Activated T-helper 2 cell treated with anti-CD3 and anti-CD28 coated beads, Interferon-gamma antibody, Interleukin-2, Interleukin-4, amounts not matched to agents 10 μg/mL and 5 μg/mL and 100 μg/mL, durations not matched to agents 14 hours and 24 hours and 36 hours (primary cell): ENCODE measurements at regions of chr4 and their contacts with region 1.

Region 1: GRCh38 chr4:169485791-169486742 is 126.3 kb downstream of the NEK1 start:
- DNase-seq: no peak
- H3K4me3 Mint-ChIP-seq: no peak overlapping the region
- H3K27ac Mint-ChIP-seq: no peak overlapping the region
- H3K4me1 Mint-ChIP-seq: peaks cover 5% of the 10 kb centered on the region
- H3K27me3 Mint-ChIP-seq: no peaks in the 10 kb centered on the region

Region 2: DNA sequence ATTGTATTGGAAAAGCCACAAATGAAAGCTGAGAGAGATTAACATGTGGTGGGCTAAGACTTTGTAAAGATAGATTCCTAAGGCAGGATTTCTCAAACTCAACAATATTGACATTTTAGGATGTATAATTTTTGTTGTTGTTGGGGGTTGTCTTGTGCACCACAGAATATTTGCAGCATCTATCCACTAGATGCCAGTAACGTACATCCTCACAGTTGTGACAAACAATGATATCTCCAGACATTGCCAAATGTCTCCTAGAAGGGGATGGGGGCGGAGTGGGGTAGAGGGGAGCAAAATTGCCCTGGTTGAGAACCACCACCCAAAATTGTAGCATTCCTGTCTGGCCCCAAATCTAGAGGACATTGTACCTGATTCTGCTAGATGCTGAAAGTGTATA is 461.3 kb before region 1 on chr4:
- intact Hi-C with region 1: loop called (anchors 5 kb)
- DNase-seq: no peak
- H3K4me3 Mint-ChIP-seq: no peak overlapping the region
- H3K27ac Mint-ChIP-seq: no peak overlapping the region
- H3K4me1 Mint-ChIP-seq: no peaks in the 10 kb centered on the region
- H3K27me3 Mint-ChIP-seq: peaks cover 11% of the 10 kb centered on the region

Region 3: DNA sequence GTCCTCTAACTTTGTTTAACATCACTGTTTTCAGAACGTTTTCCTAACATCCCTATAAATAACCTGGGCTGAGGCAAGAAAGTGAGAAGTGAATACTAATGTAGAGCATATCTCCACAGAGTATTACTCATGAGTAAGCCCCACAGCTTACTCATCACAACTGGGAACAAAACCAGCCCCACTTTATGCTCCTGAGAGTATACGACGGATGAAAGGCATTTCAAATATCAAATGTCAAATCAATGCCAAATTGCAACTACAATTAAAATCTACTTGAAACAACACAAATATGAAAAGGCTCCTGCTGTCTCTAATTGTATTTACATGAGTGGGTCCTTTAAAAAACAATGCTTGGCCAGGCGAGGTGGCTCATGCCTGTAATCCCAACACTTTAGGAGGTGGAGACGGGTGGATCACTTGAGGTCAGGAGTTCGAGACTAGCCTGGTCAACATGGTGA is 256.5 kb before region 1 on chr4:
- intact Hi-C with region 1: no loop called
- DNase-seq: no peak
- H3K4me3 Mint-ChIP-seq: no peak overlapping the region
- H3K27ac Mint-ChIP-seq: no peak overlapping the region
- H3K4me1 Mint-ChIP-seq: peaks cover 3% of the 10 kb centered on the region
- H3K27me3 Mint-ChIP-seq: no peaks in the 10 kb centered on the region